GM10248 (cell line): ENCODE measurements at regions of chr7 and their contacts with region 1.

Region 1: GRCh38 chr7:4973728-4974198 is 14.8 kb upstream of the MMD2 start:
- DNase-seq: peak; percentile 88
- CTCF ChIP-seq: peak; percentile 79

Region 2: GRCh38 chr7:4951304-4951703 is 22.5 kb before region 1 on chr7:
- CTCF ChIA-PET with region 1: interaction called, 13 read pairs
- POLR2A ChIA-PET with region 1: interaction called, 4 read pairs
- DNase-seq: no peak
- CTCF ChIP-seq: no peak

Region 3: GRCh38 chr7:4962872-4963800 is 10.6 kb before region 1 on chr7:
- CTCF ChIA-PET with region 1: interaction called, 14 read pairs
- POLR2A ChIA-PET with region 1: no interaction called
- DNase-seq: no peak
- CTCF ChIP-seq: no peak

Region 4: DNA sequence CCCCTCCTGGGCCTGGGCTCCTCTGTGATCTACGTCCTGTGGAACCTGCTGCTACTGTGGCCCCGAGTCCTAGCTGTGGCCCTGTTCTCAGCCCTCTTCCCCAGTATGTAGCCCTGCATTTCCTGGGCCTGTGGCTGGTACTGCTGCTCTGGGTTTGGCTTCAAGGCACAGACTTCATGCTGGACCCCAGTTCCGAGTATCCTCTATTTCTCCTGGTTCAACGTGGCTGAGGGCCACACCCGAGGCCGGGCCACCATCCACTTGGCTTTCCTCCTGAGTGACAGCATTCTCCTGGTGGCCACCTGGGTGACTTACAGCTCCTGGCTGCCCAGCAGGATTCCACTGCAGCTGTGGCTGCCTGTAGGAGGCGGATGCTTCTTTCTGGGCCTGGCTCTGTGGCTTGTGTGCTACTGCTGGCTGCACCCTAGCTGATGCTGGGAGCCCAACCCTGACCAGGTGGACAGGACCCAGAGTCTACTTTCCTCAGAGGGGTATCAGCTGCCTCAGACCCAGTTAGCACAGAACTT is 23.0 kb after region 1 on chr7:
- CTCF ChIA-PET with region 1: interaction called, 15 read pairs
- POLR2A ChIA-PET with region 1: no interaction called
- DNase-seq: no peak
- CTCF ChIP-seq: no peak

Region 5: GRCh38 chr7:5083311-5083711 is 109.5 kb after region 1 on chr7:
- CTCF ChIA-PET with region 1: interaction called, 45 read pairs
- POLR2A ChIA-PET with region 1: no interaction called
- DNase-seq: no peak
- CTCF ChIP-seq: no peak